ENCODE measurements at regions of chrX and their contacts with region 1.

Region 1: DNA sequence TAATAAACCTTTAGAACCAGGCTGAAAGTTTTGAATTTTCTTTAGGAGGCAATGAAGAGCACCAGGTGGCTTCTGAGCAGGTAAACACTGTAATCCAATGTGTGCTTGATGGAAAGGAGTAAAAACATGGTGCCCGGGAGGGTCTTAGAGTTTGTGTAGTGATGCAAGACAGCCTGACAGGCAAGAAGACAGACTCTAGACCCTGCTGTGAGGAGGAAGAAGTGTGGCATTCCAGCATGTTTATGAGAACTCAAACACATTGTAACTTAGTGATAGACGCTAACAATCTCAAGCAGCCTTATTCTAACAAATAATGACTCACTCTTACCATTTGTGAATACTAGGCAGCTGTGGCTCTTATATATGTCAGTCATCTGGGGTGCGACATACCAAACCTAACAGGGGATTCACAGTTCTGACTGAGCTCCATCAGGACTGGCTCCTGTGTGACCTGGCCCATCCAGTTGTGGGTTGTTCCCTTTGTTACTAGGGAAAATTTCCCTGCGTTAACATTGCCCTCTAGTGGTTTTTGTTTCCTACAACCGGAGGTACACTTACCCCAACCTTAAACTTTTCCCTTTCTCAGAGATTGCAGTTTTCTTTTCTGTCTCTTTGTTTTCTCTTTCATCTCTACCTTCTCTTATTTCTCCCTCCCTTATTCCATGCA is 53.8 kb downstream of the VSIG4 start:
- DNase-seq: no peak
- CTCF ChIP-seq: peak; percentile 51

Region 2: GRCh38 chrX:65745992-65746391 is 240.1 kb before region 1 on chrX:
- in situ Hi-C with region 1: loop called (anchors 25 kb)
- DNase-seq: no peak
- CTCF ChIP-seq: peak; percentile 34

Region 3: DNA sequence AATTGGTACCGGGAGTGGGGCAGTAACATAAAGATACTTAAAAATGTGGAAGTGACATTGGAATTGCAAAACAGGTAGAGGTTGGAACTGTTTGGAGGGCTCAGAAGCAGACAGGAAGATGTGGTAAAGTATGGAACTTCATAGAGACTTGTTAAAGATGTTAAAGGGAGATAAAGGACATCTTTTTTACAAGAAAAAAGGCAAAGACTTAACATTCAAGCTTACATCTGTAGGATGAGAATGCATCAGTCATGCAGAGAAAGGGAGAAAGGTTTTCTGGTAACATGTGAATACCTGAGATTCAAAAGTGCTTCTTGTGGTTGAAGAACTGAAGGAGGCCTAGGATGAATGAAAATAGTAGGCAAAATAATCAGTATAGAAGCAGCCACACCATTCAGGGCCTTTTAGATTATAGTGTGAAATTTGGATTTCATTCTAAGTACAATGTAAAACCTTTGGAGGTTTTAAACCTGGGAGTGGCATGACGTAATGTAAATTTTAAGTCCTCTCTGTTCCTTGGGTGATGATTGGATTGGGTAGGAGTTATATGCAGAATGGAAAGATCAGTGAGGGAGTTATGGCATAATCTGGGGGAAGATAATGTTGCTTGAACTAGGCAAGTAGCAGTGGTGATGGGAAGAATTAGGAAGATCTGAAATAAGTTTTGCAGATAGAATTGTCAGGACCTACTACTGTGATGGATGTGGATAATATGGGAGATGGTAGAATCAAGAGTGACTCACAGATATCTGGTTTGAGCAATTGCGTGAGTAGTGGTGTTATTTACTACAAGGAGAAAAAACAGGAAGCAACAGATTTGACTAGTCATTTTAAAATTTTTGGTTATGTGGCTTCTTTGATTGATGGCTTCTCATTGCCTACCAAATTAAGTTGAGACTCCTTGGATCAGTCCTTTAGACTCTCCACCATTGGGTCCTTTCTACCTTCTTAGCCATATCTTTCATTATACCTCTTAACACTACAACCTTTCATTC is 84.9 kb before region 1 on chrX:
- in situ Hi-C with region 1: no loop called
- DNase-seq: no peak
- CTCF ChIP-seq: no peak

Region 4: DNA sequence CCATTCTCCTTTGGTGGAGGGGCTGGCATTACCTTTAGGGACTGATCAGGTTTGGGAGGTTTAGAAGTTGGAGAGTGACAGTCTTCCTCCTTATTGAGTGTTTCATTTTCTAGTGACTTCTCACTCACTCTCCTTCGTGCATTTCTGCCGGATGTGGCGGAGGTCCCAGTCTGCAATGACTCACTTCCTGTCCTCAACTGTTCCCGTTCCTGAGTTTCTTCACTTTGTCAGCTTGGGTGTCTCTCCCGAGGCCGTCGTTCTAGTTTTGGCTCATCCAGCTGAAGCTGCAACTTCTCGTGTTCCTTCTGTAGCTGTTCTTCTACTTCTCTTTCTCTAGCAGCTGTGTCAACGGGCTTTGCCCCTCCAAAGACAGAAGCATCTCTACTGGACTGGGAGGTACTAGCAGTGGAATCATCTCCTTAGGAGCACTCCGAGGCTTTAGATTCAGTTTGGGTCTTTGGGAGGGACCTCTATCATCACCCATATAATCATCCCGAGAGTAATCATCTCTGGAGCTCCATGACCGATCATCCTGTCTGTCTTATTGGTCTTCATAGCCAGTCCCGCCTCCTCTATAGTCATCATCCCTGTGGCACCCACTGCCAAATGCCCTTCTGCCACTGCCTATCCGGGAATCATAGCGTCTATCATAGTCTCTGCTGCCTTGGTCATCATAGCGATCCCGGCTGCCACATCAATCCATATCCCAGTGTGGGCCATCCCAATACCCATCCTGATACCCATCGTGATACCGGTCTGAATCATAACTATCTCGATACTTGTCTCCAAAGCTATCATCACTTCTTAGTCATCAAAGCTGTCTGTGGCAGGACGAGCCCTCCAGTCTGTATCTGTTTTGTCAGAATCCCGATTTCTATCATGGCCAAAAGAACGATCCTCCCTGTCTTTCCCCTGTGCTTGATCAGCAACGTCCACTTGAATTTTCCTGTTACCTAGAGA is 89.1 kb after region 1 on chrX:
- in situ Hi-C with region 1: no loop called
- DNase-seq: no peak
- CTCF ChIP-seq: no peak

Measured in GM13977 (cell line).